GM12878 (cell line): ENCODE measurements at regions of chr1 and their contacts with region 1.

Region 1: GRCh38 chr1:52365746-52366516 is at the start of gene CC2D1B:
- DNase-seq: peak; percentile 94
- ATAC-seq: peak; percentile 97
- H3K4me3 ChIP-seq: peak within 1 kb of the TSS; percentile 88
- H3K27ac ChIP-seq: peak within 1 kb of the TSS; percentile 84
- H3K4me1 ChIP-seq: peaks cover 4% of the 10 kb centered on the region
- H3K27me3 ChIP-seq: no peaks in the 10 kb centered on the region
- CTCF ChIP-seq: no peak; a peak in 1 of 6 replicates
- EP300 ChIP-seq: no peak
- POLR2A ChIP-seq: peak; percentile 99
- RAD21 ChIP-seq: no peak
- polyA plus RNA-seq, gene CC2D1B: 0.90 to 2.2 TPM

Region 2: GRCh38 chr1:52141513-52142219 is 224.3 kb before region 1 on chr1 and contains the start of gene ZFYVE9:
- CTCF ChIA-PET with region 1: no interaction called
- POLR2A ChIA-PET with region 1: no interaction called
- RAD21 ChIA-PET with region 1: no interaction called
- SMC1A ChIA-PET with region 1: no interaction called
- in situ Hi-C with region 1: no loop called
- intact Hi-C with region 1: loop called (anchors 10 kb)
- DNase-seq: no peak
- ATAC-seq: peak; percentile 89
- H3K4me3 ChIP-seq: peak within 1 kb of the TSS; percentile 79
- H3K27ac ChIP-seq: peak within 1 kb of the TSS; percentile 21
- H3K4me1 ChIP-seq: peaks cover 11% of the 10 kb centered on the region; the same call in 1 of the 2 replicates
- H3K27me3 ChIP-seq: no peaks in the 10 kb centered on the region; a peak in 1 of 4 replicates
- CTCF ChIP-seq: peak; percentile 62 to 84 (median 64); a peak in 5 of 6 replicates
- EP300 ChIP-seq: no peak
- POLR2A ChIP-seq: no peak; the same call in 1 of the 2 replicates
- RAD21 ChIP-seq: peak; percentile 60
- polyA plus RNA-seq, gene ZFYVE9: 0.26 to 0.47 TPM

Region 3: DNA sequence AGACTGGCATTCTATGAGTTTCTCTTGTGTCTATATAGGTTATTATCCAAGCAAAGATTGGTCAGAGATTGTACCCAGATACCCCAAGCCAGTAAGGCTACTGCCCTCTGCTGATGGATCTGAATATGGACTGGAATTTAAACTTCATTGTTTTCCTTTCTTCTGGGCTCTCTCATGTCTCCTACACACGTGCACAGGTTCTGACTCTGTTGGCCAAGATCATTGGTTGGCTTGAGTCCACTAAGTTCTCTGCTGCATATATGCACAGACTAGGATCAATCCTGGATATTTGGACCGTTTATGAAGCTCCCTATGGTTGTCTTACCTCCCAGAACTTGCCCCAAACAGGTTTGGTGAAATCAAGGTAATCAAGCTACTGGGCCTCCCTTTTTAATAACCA is 69.6 kb before region 1 on chr1:
- CTCF ChIA-PET with region 1: no interaction called
- POLR2A ChIA-PET with region 1: no interaction called
- RAD21 ChIA-PET with region 1: no interaction called
- SMC1A ChIA-PET with region 1: no interaction called
- in situ Hi-C with region 1: no loop called
- intact Hi-C with region 1: no loop called
- DNase-seq: peak; percentile 7
- ATAC-seq: peak; percentile 86
- H3K4me3 ChIP-seq: no peak overlapping the region
- H3K27ac ChIP-seq: no peak overlapping the region
- H3K4me1 ChIP-seq: no peaks in the 10 kb centered on the region
- H3K27me3 ChIP-seq: no peaks in the 10 kb centered on the region
- CTCF ChIP-seq: peak; percentile 67 to 77 (median 68)
- EP300 ChIP-seq: no peak
- POLR2A ChIP-seq: no peak
- RAD21 ChIP-seq: peak; percentile 94